Right ventricle myocardium inferior (tissue), 1 donor: ENCODE measurements at regions of chrX and their contacts with region 1.

Region 1: DNA sequence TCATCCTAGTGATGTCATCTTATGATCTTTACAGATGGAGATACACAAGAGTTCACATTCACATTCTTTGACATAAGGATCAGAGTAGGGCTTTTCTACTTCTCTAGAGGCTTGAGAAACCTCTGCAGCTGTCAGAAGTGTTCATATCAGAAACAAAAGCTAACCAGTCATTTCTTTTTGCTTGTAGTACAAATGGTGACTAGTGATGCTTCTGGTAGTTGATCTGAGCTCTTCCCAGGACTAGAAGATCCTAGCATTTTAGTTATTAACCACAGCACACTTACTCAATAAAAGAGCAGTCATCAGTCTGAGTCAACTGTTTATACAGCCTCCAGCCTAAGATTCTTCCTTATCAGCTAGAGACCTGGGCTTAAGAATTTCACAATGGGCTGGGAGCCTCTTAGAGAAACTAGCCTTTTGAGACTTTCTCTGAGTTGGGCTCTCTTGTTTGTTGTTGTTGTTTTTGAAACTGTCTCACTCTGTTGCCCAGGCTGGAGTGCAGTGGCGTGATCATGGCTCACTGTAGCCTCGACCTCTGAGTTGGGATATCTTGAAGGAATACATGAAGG is 84.1 kb downstream of the TMEM164 start:
- DNase-seq: no peak
- ATAC-seq: no peak

Region 2: GRCh38 chrX:110012834-110013485 is 74.0 kb before region 1 on chrX:
- intact Hi-C with region 1: loop called (anchors 10 kb)
- DNase-seq: no peak
- ATAC-seq: no peak